ENCODE measurements at regions of chr17 and their contacts with region 1.

Region 1: DNA sequence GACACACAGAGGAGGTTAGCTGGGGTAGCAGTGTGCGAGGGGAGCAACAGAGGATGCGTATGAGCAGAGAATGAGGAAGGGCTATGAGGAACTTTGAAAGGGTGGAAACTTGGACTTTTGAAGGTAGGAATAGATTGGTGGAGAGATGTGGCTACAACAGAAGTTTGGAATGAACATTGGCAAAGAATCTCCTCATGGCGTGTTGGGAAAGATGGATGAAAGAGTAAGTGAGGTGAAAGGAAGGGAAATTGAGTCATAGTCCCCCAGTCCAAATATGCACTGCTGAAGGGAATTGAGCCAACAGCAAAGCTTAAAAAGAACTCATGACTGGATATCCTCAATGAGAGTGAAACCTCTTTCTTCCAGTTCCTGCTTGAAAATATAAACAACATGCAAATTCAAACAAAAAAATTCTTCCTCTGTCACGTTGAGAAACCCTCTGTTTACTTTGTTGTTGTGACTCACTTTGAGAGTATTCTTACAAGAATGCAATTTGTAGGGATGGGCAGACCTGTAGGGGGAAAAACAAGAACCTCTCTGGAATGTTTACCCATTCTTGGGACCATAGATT is 313.2 kb upstream of the KCNJ16 start:
- DNase-seq: peak; percentile 98
- ATAC-seq: peak; percentile 93
- H3K4me3 ChIP-seq: no peak overlapping the region; the same call in 1 of the 2 replicates
- H3K27ac ChIP-seq: peak overlapping the region; percentile 84
- H3K4me1 ChIP-seq: peaks cover 50% of the 10 kb centered on the region
- H3K27me3 ChIP-seq: no peaks in the 10 kb centered on the region
- CTCF ChIP-seq: no peak

Region 2: GRCh38 chr17:69575346-69575761 is 186.5 kb before region 1 on chr17:
- CTCF ChIA-PET with region 1: no interaction called
- POLR2A ChIA-PET with region 1: no interaction called
- intact Hi-C with region 1: loop called (anchors 1 kb)
- DNase-seq: peak; percentile 97
- ATAC-seq: peak; percentile 87
- H3K4me3 ChIP-seq: no peak overlapping the region; the same call in 1 of the 2 replicates
- H3K27ac ChIP-seq: peak overlapping the region; percentile 58
- H3K4me1 ChIP-seq: peaks cover 25% of the 10 kb centered on the region
- H3K27me3 ChIP-seq: no peaks in the 10 kb centered on the region
- CTCF ChIP-seq: no peak

Region 3: DNA sequence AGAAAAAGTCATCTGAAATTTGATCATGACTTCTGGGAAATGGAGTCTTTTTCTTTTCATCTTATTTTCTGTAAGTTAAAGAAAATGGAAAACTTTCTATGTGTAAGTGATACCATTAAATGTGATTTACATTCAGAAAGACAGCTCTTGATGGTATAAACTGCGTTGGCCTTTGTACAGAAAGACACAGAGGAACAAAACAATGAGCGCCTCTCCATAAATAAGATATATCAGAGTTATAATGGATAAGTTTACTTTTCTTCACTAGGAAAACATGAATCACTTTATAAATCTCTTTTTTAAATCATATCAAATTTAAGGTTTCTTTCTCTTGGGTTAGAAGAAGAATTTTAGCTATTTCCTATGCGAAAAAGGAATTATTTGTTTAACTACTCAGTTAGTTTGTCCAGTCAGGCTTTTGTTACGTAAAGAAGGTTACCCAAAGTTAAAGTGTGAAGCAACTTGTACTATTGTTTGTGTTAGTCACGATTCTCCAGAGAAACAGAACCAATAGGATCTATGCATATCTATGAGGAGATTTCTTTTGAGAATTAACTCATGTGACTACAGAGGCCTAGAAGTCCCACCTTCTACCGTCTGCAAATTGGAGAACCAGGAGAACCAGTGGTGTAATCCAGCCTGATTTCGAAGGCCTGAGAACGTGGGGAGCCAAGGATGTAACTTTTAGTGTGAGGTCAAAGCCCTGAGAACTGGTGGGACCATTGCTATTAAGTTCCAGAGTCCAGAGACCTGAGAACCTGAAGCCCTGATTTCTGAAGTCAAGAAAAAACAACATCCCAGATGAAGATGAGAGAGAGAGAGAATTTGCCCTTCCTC is 17.8 kb after region 1 on chr17:
- CTCF ChIA-PET with region 1: interaction called, 4 read pairs
- POLR2A ChIA-PET with region 1: no interaction called
- intact Hi-C with region 1: loop called (anchors 1 kb)
- DNase-seq: peak; percentile 91
- ATAC-seq: peak; percentile 79
- H3K4me3 ChIP-seq: no peak overlapping the region
- H3K27ac ChIP-seq: peak overlapping the region; percentile 82
- H3K4me1 ChIP-seq: peaks cover 37% of the 10 kb centered on the region
- H3K27me3 ChIP-seq: no peaks in the 10 kb centered on the region
- CTCF ChIP-seq: no peak

Region 4: GRCh38 chr17:70137451-70138230 is 375.8 kb after region 1 on chr17:
- CTCF ChIA-PET with region 1: no interaction called
- POLR2A ChIA-PET with region 1: no interaction called
- intact Hi-C with region 1: loop called (anchors 5 kb)
- DNase-seq: peak; percentile 89
- ATAC-seq: peak; percentile 96
- H3K4me3 ChIP-seq: peak overlapping the region; percentile 67
- H3K27ac ChIP-seq: peak overlapping the region; percentile 22; the same call in 1 of the 2 replicates
- H3K4me1 ChIP-seq: peaks cover 16% of the 10 kb centered on the region
- H3K27me3 ChIP-seq: no peaks in the 10 kb centered on the region
- CTCF ChIP-seq: no peak

Region 5: DNA sequence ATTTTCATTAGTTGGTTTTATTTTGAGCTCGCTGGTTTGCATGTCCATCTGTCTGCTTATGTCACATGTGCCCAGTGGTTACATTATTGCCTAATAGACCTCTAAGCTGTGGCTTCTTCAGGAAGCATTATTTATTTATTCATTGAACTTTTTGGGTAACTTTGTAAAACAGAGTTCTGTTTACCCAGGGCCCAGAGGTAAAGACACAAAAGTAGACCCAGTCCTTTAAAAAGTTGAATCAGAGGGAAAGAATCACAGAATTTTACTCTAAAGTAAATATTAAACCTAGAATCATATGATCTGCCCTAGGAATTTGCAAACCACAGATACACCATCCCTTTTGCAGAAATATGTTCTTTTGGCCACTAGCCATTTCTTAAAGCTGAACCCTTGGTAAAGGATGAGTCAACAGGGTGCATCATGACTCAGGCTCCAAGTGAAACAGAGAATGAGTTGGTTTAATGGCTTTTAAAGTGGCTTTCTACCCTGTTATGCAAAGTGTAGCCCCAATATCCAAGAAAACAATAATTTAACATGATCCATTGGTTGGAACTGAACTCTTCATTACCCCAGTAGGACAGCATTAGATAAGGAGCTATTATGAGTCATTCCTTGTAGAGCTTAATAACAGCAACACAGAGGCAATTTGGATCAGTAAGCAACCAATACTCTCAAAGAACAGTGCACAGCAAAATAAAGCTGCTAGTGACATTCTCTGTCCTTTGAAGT is 643.8 kb after region 1 on chr17:
- CTCF ChIA-PET with region 1: no interaction called
- POLR2A ChIA-PET with region 1: no interaction called
- intact Hi-C with region 1: loop called (anchors 5 kb)
- DNase-seq: peak; percentile 99
- ATAC-seq: peak; percentile 95
- H3K4me3 ChIP-seq: peak overlapping the region; percentile 33; the same call in 1 of the 2 replicates
- H3K27ac ChIP-seq: peak overlapping the region; percentile 72
- H3K4me1 ChIP-seq: peaks cover 24% of the 10 kb centered on the region
- H3K27me3 ChIP-seq: no peaks in the 10 kb centered on the region
- CTCF ChIP-seq: no peak

Measured in PC-3 (cell line).